Gastrocnemius medialis (tissue), 4 donors: ENCODE measurements at regions of chr4 and their contacts with region 1.

Region 1: GRCh38 chr4:140012688-140013486 is 141.1 kb downstream of the MAML3 start:
- DNase-seq: peak in 1 of 2 donors; percentile 49
- ATAC-seq: peak; percentile 90 to 94
- H3K4me3 ChIP-seq: no peak overlapping the region
- H3K27ac ChIP-seq: no peak overlapping the region
- H3K4me1 ChIP-seq: peaks cover 0 to 8% of the 10 kb centered on the region in 2 donors
- H3K27me3 ChIP-seq: no peaks in the 10 kb centered on the region
- CTCF ChIP-seq: peak; percentile 31 to 57 (median 49)
- POLR2A ChIP-seq: no peak

Region 2: GRCh38 chr4:139988863-139989733 is 23.8 kb before region 1 on chr4:
- in situ Hi-C with region 1: no loop called
- intact Hi-C with region 1: loop called (anchors 2 kb)
- DNase-seq: no peak
- ATAC-seq: peak; percentile 49 to 52
- H3K4me3 ChIP-seq: no peak overlapping the region
- H3K27ac ChIP-seq: no peak overlapping the region
- H3K4me1 ChIP-seq: peaks cover 7 to 19% of the 10 kb centered on the region in 2 donors
- H3K27me3 ChIP-seq: no peaks in the 10 kb centered on the region
- CTCF ChIP-seq: no peak
- POLR2A ChIP-seq: no peak

Region 3: GRCh38 chr4:140237606-140237986 is 224.7 kb after region 1 on chr4:
- in situ Hi-C with region 1: loop called in 1 of 4 experiments (anchors 25 kb)
- intact Hi-C with region 1: no loop called
- DNase-seq: peak; percentile 53 to 70
- ATAC-seq: peak; percentile 42 to 49
- H3K4me3 ChIP-seq: peak overlapping the region; percentile 25 to 45 (median 39)
- H3K27ac ChIP-seq: peak overlapping the region; percentile 84 to 90 (median 88)
- H3K4me1 ChIP-seq: peaks cover 38 to 48% of the 10 kb centered on the region in 2 donors
- H3K27me3 ChIP-seq: no peaks in the 10 kb centered on the region
- CTCF ChIP-seq: no peak
- POLR2A ChIP-seq: no peak